Activated naive CD4-positive, alpha-beta T cell treated with anti-CD3 and anti-CD28 coated beads for 36 hours (primary cell): ENCODE measurements at regions of chr11 and their contacts with region 1.

Region 1: GRCh38 chr11:46593550-46594373 is at the start of gene AMBRA1:
- DNase-seq: peak; percentile 94
- H3K4me3 Mint-ChIP-seq: peak within 1 kb of the TSS; percentile 94
- H3K27ac Mint-ChIP-seq: peak within 1 kb of the TSS; percentile 80
- H3K4me1 Mint-ChIP-seq: peaks cover 39% of the 10 kb centered on the region
- H3K27me3 Mint-ChIP-seq: no peaks in the 10 kb centered on the region
- total RNA-seq, gene AMBRA1: 19.0 to 23.1 TPM

Region 2: GRCh38 chr11:46560300-46560991 is 33.3 kb before region 1 on chr11:
- CTCF ChIA-PET with region 1: no interaction called
- intact Hi-C with region 1: loop called (anchors 1 kb)
- DNase-seq: peak; percentile 52
- H3K4me3 Mint-ChIP-seq: peak overlapping the region; percentile 75
- H3K27ac Mint-ChIP-seq: peak overlapping the region; percentile 82
- H3K4me1 Mint-ChIP-seq: peaks cover 61% of the 10 kb centered on the region
- H3K27me3 Mint-ChIP-seq: no peaks in the 10 kb centered on the region

Region 3: GRCh38 chr11:46649180-46649738 is 55.5 kb after region 1 on chr11:
- CTCF ChIA-PET with region 1: no interaction called
- intact Hi-C with region 1: no loop called
- DNase-seq: no peak
- H3K4me3 Mint-ChIP-seq: no peak overlapping the region
- H3K27ac Mint-ChIP-seq: no peak overlapping the region
- H3K4me1 Mint-ChIP-seq: no peaks in the 10 kb centered on the region
- H3K27me3 Mint-ChIP-seq: no peaks in the 10 kb centered on the region

Region 4: DNA sequence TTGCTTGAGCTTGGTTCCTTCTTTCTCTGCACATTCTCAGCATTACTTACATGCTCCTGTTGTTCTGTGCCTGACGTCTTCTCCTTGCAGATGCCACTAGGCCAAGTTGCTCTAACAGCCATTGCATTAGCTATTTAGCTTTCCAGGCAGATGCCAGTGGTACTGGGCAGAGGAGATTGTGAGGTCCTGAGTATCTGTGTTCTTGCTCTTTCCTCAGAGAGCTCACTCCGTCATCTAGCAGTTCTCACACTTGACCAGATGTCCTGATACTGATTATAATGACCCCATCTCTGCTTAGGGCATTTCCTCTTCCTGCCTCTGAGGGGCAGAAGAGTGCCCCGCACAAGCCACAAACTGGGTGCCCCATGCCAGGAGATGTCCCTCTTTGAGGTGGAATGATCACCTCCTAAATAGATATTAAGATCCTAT is 76.0 kb after region 1 on chr11:
- CTCF ChIA-PET with region 1: no interaction called
- intact Hi-C with region 1: loop called (anchors 2 kb)
- DNase-seq: no peak
- H3K4me3 Mint-ChIP-seq: no peak overlapping the region
- H3K27ac Mint-ChIP-seq: peak overlapping the region; percentile 62
- H3K4me1 Mint-ChIP-seq: peaks cover 51% of the 10 kb centered on the region
- H3K27me3 Mint-ChIP-seq: no peaks in the 10 kb centered on the region

Region 5: GRCh38 chr11:46936138-46937110 is 342.7 kb after region 1 on chr11 and contains the start of gene CSTPP1:
- CTCF ChIA-PET with region 1: no interaction called
- intact Hi-C with region 1: loop called (anchors 1 kb)
- DNase-seq: peak; percentile 97
- H3K4me3 Mint-ChIP-seq: peak within 1 kb of the TSS; percentile 98
- H3K27ac Mint-ChIP-seq: peak within 1 kb of the TSS; percentile 88
- H3K4me1 Mint-ChIP-seq: peaks cover 18% of the 10 kb centered on the region
- H3K27me3 Mint-ChIP-seq: no peaks in the 10 kb centered on the region
- total RNA-seq, gene CSTPP1: 14.0 TPM

Region 6: GRCh38 chr11:47899801-47900200 is 1306.0 kb after region 1 on chr11:
- CTCF ChIA-PET with region 1: no interaction called
- intact Hi-C with region 1: no loop called
- DNase-seq: no peak
- H3K4me3 Mint-ChIP-seq: no peak overlapping the region
- H3K27ac Mint-ChIP-seq: no peak overlapping the region
- H3K4me1 Mint-ChIP-seq: peaks cover 7% of the 10 kb centered on the region
- H3K27me3 Mint-ChIP-seq: no peaks in the 10 kb centered on the region